ENCODE measurements at regions of chr13 and their contacts with region 1.

Region 1: DNA sequence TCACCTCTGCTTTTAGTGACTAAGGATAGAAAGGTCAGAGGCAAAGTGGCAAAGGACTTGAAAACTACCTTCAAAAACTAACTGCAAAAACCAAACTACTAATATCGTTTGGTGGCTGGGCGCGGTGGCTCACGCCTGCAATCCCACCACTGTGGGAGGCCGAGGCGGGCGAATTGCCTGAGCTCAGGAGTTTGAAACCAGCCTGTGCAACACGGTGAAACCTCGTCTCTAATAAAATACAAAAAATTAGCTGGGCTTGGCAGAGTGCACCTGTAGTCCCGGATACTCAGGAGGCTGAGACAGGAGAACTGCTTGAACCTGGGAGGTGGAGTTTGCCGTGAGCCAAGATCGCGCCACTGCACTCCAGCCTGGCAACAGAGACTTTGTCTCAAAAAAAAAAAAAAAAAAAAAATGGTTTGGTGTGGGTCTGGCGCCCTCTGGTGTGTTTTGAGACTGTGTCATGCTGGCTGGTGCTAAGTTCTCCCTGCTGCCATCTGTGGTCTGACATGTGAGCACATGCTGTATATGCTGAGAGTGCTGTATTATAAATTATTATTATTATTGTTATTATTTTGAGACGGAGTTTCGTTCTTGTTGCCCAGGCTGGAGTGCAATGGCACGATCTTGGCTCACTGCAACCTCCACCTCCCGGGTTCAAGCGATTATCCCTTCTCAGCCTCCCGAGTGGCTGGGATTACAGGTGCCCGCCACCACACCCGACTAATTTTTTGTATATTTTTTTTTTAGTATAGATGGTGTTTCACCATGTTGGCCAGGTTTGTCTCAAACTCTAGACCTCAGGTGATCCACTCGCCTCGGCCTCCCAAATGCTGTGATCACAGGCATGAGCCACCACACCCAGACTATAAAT is 36.0 kb upstream of the RNF17 start:
- DNase-seq: peak; percentile 90
- CTCF ChIP-seq: peak; percentile 68

Region 2: DNA sequence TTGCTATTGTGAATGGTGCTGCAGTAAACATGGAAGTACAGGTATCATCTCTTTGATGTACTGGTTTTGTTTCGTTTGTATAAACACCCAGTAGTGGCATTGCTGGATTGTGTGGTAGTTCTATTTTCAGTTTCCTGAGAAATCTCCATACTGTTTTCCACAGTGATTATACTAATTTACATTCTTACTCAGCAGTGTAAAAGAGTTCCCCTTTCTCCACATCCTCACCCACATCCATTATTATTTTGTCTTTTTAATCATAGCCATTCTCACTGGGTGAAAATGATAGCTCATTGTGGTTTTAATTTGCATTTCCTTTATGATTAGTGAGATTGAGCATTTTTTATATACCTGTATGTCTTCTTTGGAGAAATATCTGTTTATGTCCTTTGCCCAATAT is 153.1 kb before region 1 on chr13:
- in situ Hi-C with region 1: loop called (anchors 10 kb)
- DNase-seq: no peak
- CTCF ChIP-seq: no peak

Region 3: GRCh38 chr13:24995226-24995804 is 267.3 kb after region 1 on chr13:
- in situ Hi-C with region 1: loop called (anchors 25 kb)
- DNase-seq: peak; percentile 78
- CTCF ChIP-seq: peak; percentile 69

Region 4: DNA sequence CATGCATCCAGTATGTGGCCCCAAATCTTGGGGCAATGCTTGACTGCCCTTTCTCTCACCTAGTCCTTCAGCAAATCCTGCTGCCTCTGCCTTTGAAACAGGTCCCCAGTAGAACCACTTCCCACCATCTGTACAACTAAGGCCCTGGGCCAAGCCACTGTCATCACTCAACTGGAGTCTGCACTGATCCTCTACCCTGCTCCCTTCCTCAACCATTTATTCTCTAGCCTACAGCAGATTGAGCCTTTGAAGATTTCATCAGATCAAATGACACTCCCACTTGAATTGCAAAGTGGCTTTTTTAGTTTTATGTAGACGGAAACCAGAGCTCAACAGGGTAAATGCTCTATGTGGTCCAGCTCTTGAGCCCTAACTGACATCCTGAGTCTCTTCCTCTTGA is 687.3 kb after region 1 on chr13:
- in situ Hi-C with region 1: no loop called
- DNase-seq: no peak
- CTCF ChIP-seq: no peak